PC-9 (cell line): ENCODE measurements at regions of chr15 and their contacts with region 1.

Region 1: DNA sequence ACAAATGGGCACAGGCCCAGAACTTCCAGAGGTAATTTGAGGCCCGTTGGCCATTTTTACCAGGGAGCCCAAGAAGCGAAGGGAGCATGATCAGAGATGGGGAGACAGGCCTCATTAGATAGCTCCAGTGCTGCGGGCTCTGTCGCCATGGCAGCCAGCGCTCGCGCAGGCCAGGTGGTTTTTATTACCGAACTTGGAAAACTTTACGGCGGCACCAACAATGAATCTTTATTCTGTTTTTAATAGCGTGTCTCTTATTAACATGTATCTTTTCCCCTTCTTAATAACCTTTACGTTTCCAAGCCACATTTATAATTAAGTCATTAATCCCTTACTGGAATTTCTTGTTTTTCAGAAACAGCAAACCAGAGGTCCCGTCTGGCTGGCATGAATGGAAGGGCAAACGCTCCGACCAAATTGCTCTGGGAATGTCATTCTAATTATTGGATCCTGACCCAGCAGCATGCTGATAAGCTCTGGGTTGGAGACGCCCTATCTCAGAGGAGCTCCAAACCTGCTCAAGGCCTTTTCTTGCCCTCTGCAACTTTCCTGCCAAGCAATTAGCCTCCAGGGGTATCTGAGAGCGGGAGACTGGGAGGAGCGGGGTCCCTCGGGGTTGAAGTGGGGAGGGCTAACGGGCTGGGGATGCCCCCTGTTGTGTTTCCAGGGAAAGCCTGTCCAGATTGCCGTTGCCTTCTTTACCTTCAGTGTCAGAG is 256.4 kb downstream of the TLE3 start:
- DNase-seq: no peak
- H3K4me3 ChIP-seq: no peak overlapping the region
- H3K27ac ChIP-seq: no peak overlapping the region
- H3K4me1 ChIP-seq: no peaks in the 10 kb centered on the region; the same call in 1 of the 2 replicates
- H3K27me3 ChIP-seq: no peaks in the 10 kb centered on the region
- CTCF ChIP-seq: no peak

Region 2: GRCh38 chr15:69976366-69976994 is 135.2 kb after region 1 on chr15:
- CTCF ChIA-PET with region 1: no interaction called
- POLR2A ChIA-PET with region 1: no interaction called
- intact Hi-C with region 1: no loop called
- DNase-seq: peak in 1 of 2 experiments; percentile 29
- H3K4me3 ChIP-seq: no peak overlapping the region
- H3K27ac ChIP-seq: no peak overlapping the region
- H3K4me1 ChIP-seq: no peaks in the 10 kb centered on the region
- H3K27me3 ChIP-seq: 0 out of 2 replicates have a peak, but pooled peaks cover 11% of the 10 kb centered on the region
- CTCF ChIP-seq: no peak

Region 3: DNA sequence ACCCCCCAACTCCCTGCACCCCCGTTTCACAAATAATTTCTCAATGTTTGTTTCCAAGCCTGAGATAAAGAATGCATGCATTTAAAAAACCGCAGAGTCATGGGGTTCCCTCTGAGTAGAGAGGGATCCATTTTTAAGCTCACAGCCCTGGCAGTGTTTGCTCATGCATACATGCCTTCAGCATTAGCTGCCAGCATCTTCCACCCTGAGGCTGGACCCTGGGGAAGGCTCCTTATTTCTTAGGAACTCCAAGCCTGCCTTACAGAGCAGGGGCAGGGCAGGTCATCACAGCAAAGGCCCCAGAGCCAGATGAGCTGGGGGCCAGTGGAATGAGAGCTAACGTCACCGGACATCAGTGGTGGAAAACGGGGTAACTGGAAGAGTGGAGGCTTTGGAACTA is 225.2 kb after region 1 on chr15:
- CTCF ChIA-PET with region 1: interaction called, 10 read pairs
- POLR2A ChIA-PET with region 1: no interaction called
- intact Hi-C with region 1: no loop called
- DNase-seq: no peak
- H3K4me3 ChIP-seq: no peak overlapping the region
- H3K27ac ChIP-seq: no peak overlapping the region
- H3K4me1 ChIP-seq: no peaks in the 10 kb centered on the region
- H3K27me3 ChIP-seq: no peaks in the 10 kb centered on the region
- CTCF ChIP-seq: no peak